Esophagus squamous epithelium (tissue), 5 donors: ENCODE measurements at regions of chr3 and their contacts with region 1.

Region 1: DNA sequence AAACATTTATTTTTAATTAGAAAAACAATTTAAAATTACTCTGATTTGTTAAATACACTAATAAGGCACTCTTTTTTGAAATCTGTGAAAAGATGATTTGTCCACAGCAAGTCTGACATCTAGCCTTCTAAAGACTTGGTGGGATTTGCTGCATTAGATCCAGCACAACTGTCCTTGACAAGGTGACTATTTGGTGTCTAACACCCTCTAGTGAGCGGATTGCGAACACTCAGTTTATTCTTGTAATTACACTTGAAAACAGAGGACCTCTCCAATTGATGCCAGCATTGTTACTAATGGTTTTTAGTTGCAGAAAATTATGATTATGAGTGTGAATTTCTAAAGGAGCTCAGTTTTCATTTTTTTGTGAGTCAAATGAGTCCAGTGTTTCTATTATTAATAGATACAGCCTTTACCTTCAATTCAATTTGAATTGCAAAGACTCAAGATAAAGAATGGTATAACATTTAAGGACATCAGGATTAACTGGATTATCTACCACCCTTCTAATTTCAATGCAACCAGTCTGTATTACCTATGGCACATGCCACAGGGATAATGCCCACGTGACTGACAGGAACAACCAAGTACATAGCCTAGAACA is 29.7 kb upstream of the STRIT1 start:
- DNase-seq: no peak
- H3K4me3 ChIP-seq: no peak overlapping the region
- H3K27ac ChIP-seq: no peak overlapping the region
- H3K4me1 ChIP-seq: no peaks in the 10 kb centered on the region
- H3K27me3 ChIP-seq: no peaks in the 10 kb centered on the region
- CTCF ChIP-seq: peak in 5 of 6 experiments; percentile 40 to 65 (median 50)
- POLR2A ChIP-seq: no peak

Region 2: GRCh38 chr3:154766765-154767503 is 556.2 kb before region 1 on chr3:
- intact Hi-C with region 1: loop called (anchors 10 kb)
- DNase-seq: no peak
- H3K4me3 ChIP-seq: no peak overlapping the region
- H3K27ac ChIP-seq: no peak overlapping the region
- H3K4me1 ChIP-seq: no peaks in the 10 kb centered on the region
- H3K27me3 ChIP-seq: no peaks in the 10 kb centered on the region
- CTCF ChIP-seq: no peak
- POLR2A ChIP-seq: no peak

Region 3: DNA sequence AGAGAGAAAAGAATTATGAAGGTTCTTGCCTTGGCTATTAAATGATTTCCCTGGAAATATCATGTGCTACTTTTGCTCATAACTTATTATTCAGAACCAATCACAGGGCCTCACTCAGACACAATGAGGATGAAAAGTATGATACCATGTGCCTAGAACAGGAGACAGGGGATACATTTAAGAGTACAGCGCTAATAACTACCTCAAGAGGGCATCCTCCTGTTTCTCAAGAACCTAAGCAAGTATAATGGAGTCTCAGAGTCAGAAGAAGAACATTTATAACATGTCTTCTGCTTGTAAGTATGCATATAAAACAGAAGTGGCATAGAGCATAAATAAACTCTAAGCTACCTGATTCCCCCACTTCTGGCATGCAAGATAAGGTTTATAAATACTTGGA is 368.4 kb before region 1 on chr3:
- intact Hi-C with region 1: loop called (anchors 10 kb)
- DNase-seq: no peak
- H3K4me3 ChIP-seq: no peak overlapping the region
- H3K27ac ChIP-seq: no peak overlapping the region
- H3K4me1 ChIP-seq: no peaks in the 10 kb centered on the region
- H3K27me3 ChIP-seq: no peaks in the 10 kb centered on the region
- CTCF ChIP-seq: peak in 1 of 6 experiments; percentile 24
- POLR2A ChIP-seq: no peak

Region 4: DNA sequence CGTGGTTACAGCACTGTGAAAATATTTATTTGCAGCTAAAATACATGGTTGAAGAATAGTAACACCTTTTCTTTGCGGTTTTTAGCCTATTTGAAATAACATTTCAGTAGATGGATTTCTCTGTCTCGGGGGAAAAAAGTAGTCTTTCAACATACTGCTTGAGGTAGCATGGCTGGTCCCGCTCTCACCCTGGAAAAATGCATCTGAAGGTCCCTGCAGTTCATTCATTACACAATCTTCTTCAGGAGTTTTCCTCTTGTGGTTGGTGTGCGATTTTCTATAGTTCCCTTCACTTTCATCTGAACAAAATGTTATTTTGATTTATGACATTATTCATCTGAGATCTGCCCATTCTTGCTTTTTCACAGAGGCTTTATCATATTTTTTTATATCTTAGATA is 105.6 kb before region 1 on chr3:
- intact Hi-C with region 1: no loop called
- DNase-seq: no peak
- H3K4me3 ChIP-seq: no peak overlapping the region
- H3K27ac ChIP-seq: no peak overlapping the region
- H3K4me1 ChIP-seq: no peaks in the 10 kb centered on the region
- H3K27me3 ChIP-seq: no peaks in the 10 kb centered on the region
- CTCF ChIP-seq: no peak
- POLR2A ChIP-seq: no peak